Right cardiac atrium (tissue), 5 donors: ENCODE measurements at regions of chr6 and their contacts with region 1.

Region 1: GRCh38 chr6:111361648-111362047 is 121.4 kb downstream of the REV3L start:
- DNase-seq: peak in 2 of 3 donors; percentile 24 to 74
- ATAC-seq: peak; percentile 47 to 74
- H3K4me3 ChIP-seq: no peak overlapping the region
- H3K27ac ChIP-seq: no peak overlapping the region
- H3K4me1 ChIP-seq: no peaks in the 10 kb centered on the region
- H3K27me3 ChIP-seq: no peaks in the 10 kb centered on the region

Region 2: GRCh38 chr6:111478749-111479148 is 117.1 kb after region 1 on chr6:
- intact Hi-C with region 1: loop called in 1 of 4 experiments (anchors 10 kb)
- DNase-seq: no peak
- ATAC-seq: no peak
- H3K4me3 ChIP-seq: no peak overlapping the region
- H3K27ac ChIP-seq: no peak overlapping the region
- H3K4me1 ChIP-seq: peaks cover 2% of the 10 kb centered on the region
- H3K27me3 ChIP-seq: no peaks in the 10 kb centered on the region

Region 3: GRCh38 chr6:111642463-111643158 is 281.0 kb after region 1 on chr6:
- intact Hi-C with region 1: loop called in 2 of 4 experiments (anchors 10 kb)
- DNase-seq: peak; percentile 60 to 83 (median 81)
- ATAC-seq: peak; percentile 91 to 93
- H3K4me3 ChIP-seq: peak overlapping the region; percentile 13
- H3K27ac ChIP-seq: no peak overlapping the region
- H3K4me1 ChIP-seq: no peaks in the 10 kb centered on the region
- H3K27me3 ChIP-seq: no peaks in the 10 kb centered on the region